Transverse colon (tissue), 4 donors: ENCODE measurements at regions of chr10 and their contacts with region 1.

Region 1: GRCh38 chr10:26621889-26622711 is 75.4 kb upstream of the PDSS1 start:
- DNase-seq: peak; percentile 67
- H3K4me3 ChIP-seq: peak overlapping the region; percentile 21 to 54 (median 40)
- H3K27ac ChIP-seq: peak overlapping the region; percentile 74 to 84 (median 80)
- H3K4me1 ChIP-seq: peaks cover 0 to 10% (median 2%) of the 10 kb centered on the region in 4 donors
- H3K27me3 ChIP-seq: peaks cover 17% of the 10 kb centered on the region
- CTCF ChIP-seq: no peak
- EP300 ChIP-seq: no peak
- POLR2A ChIP-seq: peak; percentile 30

Region 2: GRCh38 chr10:26423722-26424121 is 198.4 kb before region 1 on chr10:
- in situ Hi-C with region 1: no loop called
- intact Hi-C with region 1: no loop called
- DNase-seq: no peak
- H3K4me3 ChIP-seq: no peak overlapping the region
- H3K27ac ChIP-seq: no peak overlapping the region
- H3K4me1 ChIP-seq: no peaks in the 10 kb centered on the region
- H3K27me3 ChIP-seq: no peaks in the 10 kb centered on the region
- CTCF ChIP-seq: no peak
- EP300 ChIP-seq: no peak
- POLR2A ChIP-seq: no peak

Region 3: GRCh38 chr10:27319752-27320561 is 697.9 kb after region 1 on chr10:
- in situ Hi-C with region 1: loop called in 1 of 4 experiments (anchors 10 kb)
- intact Hi-C with region 1: no loop called
- DNase-seq: peak; percentile 49
- H3K4me3 ChIP-seq: peak overlapping the region in 3 of 4 donors; percentile 5 to 45 (median 25)
- H3K27ac ChIP-seq: peak overlapping the region in 2 of 4 donors; percentile 24 to 25
- H3K4me1 ChIP-seq: peaks cover 0 to 8% (median 2%) of the 10 kb centered on the region in 4 donors
- H3K27me3 ChIP-seq: peaks cover 10% of the 10 kb centered on the region
- CTCF ChIP-seq: no peak
- EP300 ChIP-seq: no peak
- POLR2A ChIP-seq: no peak

Region 4: GRCh38 chr10:27779462-27780015 is 1157.4 kb after region 1 on chr10:
- in situ Hi-C with region 1: no loop called
- intact Hi-C with region 1: no loop called
- DNase-seq: no peak
- H3K4me3 ChIP-seq: no peak overlapping the region
- H3K27ac ChIP-seq: no peak overlapping the region
- H3K4me1 ChIP-seq: no peaks in the 10 kb centered on the region
- H3K27me3 ChIP-seq: no peaks in the 10 kb centered on the region
- CTCF ChIP-seq: no peak
- EP300 ChIP-seq: no peak
- POLR2A ChIP-seq: no peak